CD4-positive, alpha-beta T cell (primary cell): ENCODE measurements at regions of chr15 and their contacts with region 1.

Region 1: DNA sequence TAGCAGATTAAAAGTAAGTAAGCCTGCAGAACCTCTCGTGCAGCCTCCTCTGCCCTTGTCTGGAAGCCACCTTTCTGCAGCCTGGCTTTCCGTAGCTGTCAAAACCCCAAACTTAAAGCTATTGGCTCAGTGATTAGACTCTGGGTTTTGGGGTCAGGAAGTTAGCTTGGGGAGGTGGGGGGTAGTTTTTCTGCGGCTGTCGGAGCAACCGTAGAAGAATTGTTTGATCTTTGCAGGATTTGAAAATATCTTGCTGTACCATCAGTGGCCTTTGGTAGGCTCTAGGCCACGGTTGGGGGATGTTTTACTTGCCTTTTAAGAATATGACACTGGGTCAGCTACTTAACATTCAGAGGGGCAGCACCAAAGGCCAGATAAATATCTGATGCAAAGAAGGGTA is 88.4 kb upstream of the RASGRP1 start:
- DNase-seq: peak; percentile 57 to 95 (median 73)
- ATAC-seq: peak; percentile 77
- H3K4me3 ChIP-seq: peak overlapping the region; percentile 31
- H3K4me3 Mint-ChIP-seq: peak overlapping the region; percentile 81
- H3K27ac ChIP-seq: peak overlapping the region; percentile 49 to 80
- H3K27ac Mint-ChIP-seq: peak overlapping the region; percentile 93
- H3K4me1 ChIP-seq: peaks cover 70% of the 10 kb centered on the region
- H3K4me1 Mint-ChIP-seq: peaks cover 85% of the 10 kb centered on the region
- H3K27me3 ChIP-seq: no peaks in the 10 kb centered on the region
- H3K27me3 Mint-ChIP-seq: no peaks in the 10 kb centered on the region
- CTCF ChIP-seq: peak; percentile 44

Region 2: DNA sequence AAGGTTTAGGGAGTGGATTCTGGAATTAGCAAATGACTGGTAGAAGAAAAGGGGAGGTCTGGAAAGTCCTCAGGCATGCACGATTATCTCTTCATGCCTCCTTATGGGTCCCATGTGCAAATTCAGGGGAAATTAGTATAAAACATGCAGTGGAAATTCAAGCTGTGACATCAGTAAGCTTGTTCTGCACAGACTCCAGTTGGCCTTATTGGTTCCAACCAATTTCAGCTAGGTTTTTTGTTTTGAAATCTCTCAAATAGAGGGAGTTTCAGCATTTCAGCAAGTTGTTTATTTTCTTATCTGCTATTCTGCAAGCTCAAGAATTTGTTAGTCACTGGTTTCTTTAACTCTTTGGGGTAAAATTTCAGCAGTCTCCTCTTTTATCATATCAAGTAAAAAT is 719.3 kb before region 1 on chr15:
- CTCF ChIA-PET with region 1: no interaction called
- POLR2A ChIA-PET with region 1: no interaction called
- intact Hi-C with region 1: no loop called
- DNase-seq: no peak
- ATAC-seq: no peak
- H3K4me3 ChIP-seq: no peak overlapping the region
- H3K4me3 Mint-ChIP-seq: no peak overlapping the region
- H3K27ac ChIP-seq: no peak overlapping the region
- H3K27ac Mint-ChIP-seq: no peak overlapping the region
- H3K4me1 ChIP-seq: no peaks in the 10 kb centered on the region
- H3K4me1 Mint-ChIP-seq: no peaks in the 10 kb centered on the region
- H3K27me3 ChIP-seq: no peaks in the 10 kb centered on the region
- H3K27me3 Mint-ChIP-seq: peaks cover 9% of the 10 kb centered on the region
- CTCF ChIP-seq: no peak

Region 3: GRCh38 chr15:38665586-38666305 is 12.7 kb after region 1 on chr15:
- CTCF ChIA-PET with region 1: interaction called, 32 read pairs
- POLR2A ChIA-PET with region 1: interaction called, 484 read pairs
- intact Hi-C with region 1: loop called (anchors 1 to 2 kb)
- DNase-seq: peak in 2 of 14 experiments; percentile 62 to 66
- ATAC-seq: peak; percentile 43
- H3K4me3 ChIP-seq: no peak overlapping the region
- H3K4me3 Mint-ChIP-seq: peak overlapping the region; percentile 11
- H3K27ac ChIP-seq: no peak overlapping the region
- H3K27ac Mint-ChIP-seq: peak overlapping the region; percentile 95
- H3K4me1 ChIP-seq: peaks cover 54% of the 10 kb centered on the region
- H3K4me1 Mint-ChIP-seq: peaks cover 79% of the 10 kb centered on the region
- H3K27me3 ChIP-seq: no peaks in the 10 kb centered on the region
- H3K27me3 Mint-ChIP-seq: no peaks in the 10 kb centered on the region
- CTCF ChIP-seq: no peak

Region 4: DNA sequence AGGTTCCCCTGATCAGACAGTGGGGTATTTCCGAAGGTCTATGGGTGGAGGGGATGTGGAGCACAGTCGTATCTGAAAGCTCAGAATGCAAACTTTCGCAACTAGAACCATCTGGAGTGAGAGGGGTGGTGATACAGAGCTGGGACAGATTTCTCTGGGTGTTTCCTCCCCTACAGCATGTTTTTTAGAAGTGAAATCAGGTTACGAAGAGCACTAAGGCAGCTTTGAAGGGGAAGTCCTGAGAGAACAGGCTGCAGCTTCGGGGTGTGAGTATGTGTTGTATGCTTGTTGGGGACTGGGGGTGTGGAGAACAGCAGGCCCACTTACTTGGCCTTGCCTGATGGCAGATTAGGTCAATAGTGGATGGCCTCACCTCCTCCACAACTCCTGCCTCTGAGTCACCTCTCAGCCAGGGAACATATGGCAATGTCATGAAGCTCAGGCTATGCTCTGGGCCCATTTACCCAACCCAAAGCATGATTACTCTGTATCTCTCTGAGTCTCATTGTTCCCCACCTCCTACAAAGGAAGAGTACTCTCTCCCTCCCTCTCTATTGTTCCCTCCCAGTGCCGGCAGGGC is 18.8 kb after region 1 on chr15:
- CTCF ChIA-PET with region 1: interaction called, 32 read pairs
- POLR2A ChIA-PET with region 1: interaction called, 484 read pairs
- intact Hi-C with region 1: loop called (anchors 1 to 2 kb)
- DNase-seq: peak in 11 of 14 experiments; percentile 23 to 91 (median 44)
- ATAC-seq: peak; percentile 51
- H3K4me3 ChIP-seq: no peak overlapping the region
- H3K4me3 Mint-ChIP-seq: peak overlapping the region; percentile 61
- H3K27ac ChIP-seq: peak overlapping the region; percentile 85 to 94
- H3K27ac Mint-ChIP-seq: peak overlapping the region; percentile 95
- H3K4me1 ChIP-seq: peaks cover 80% of the 10 kb centered on the region
- H3K4me1 Mint-ChIP-seq: peaks cover 68% of the 10 kb centered on the region
- H3K27me3 ChIP-seq: no peaks in the 10 kb centered on the region
- H3K27me3 Mint-ChIP-seq: no peaks in the 10 kb centered on the region
- CTCF ChIP-seq: no peak

Region 5: GRCh38 chr15:39030291-39031070 is 377.5 kb after region 1 on chr15:
- CTCF ChIA-PET with region 1: no interaction called
- POLR2A ChIA-PET with region 1: no interaction called
- intact Hi-C with region 1: no loop called
- DNase-seq: no peak
- ATAC-seq: no peak
- H3K4me3 ChIP-seq: no peak overlapping the region
- H3K4me3 Mint-ChIP-seq: no peak overlapping the region
- H3K27ac ChIP-seq: no peak overlapping the region
- H3K27ac Mint-ChIP-seq: no peak overlapping the region
- H3K4me1 ChIP-seq: no peaks in the 10 kb centered on the region
- H3K4me1 Mint-ChIP-seq: no peaks in the 10 kb centered on the region
- H3K27me3 ChIP-seq: no peaks in the 10 kb centered on the region
- H3K27me3 Mint-ChIP-seq: peaks cover 4% of the 10 kb centered on the region
- CTCF ChIP-seq: no peak